Activated CD8-positive, alpha-beta memory T cell treated with anti-CD3 and anti-CD28 coated beads, Interleukin-2, amount 10 ng/mL, durations not matched to agents 7 days and 5 days (primary cell): ENCODE measurements at regions of chr1 and their contacts with region 1.

Region 1: GRCh38 chr1:151847842-151848596 is 5.5 kb downstream of the THEM5 start:
- DNase-seq: peak; percentile 31
- ATAC-seq: no peak
- H3K4me3 Mint-ChIP-seq: no peak overlapping the region
- H3K27ac Mint-ChIP-seq: peak overlapping the region; percentile 57
- H3K4me1 Mint-ChIP-seq: peaks cover 39% of the 10 kb centered on the region
- H3K27me3 Mint-ChIP-seq: no peaks in the 10 kb centered on the region

Region 2: GRCh38 chr1:151710187-151710840 is 137.7 kb before region 1 on chr1:
- CTCF ChIA-PET with region 1: no interaction called
- DNase-seq: peak; percentile 46
- ATAC-seq: peak; percentile 8
- H3K4me3 Mint-ChIP-seq: no peak overlapping the region
- H3K27ac Mint-ChIP-seq: no peak overlapping the region
- H3K4me1 Mint-ChIP-seq: no peaks in the 10 kb centered on the region
- H3K27me3 Mint-ChIP-seq: peaks cover 10% of the 10 kb centered on the region

Region 3: GRCh38 chr1:151811147-151811546 is 36.9 kb before region 1 on chr1:
- CTCF ChIA-PET with region 1: no interaction called
- DNase-seq: no peak
- ATAC-seq: no peak
- H3K4me3 Mint-ChIP-seq: no peak overlapping the region
- H3K27ac Mint-ChIP-seq: no peak overlapping the region
- H3K4me1 Mint-ChIP-seq: peaks cover 24% of the 10 kb centered on the region
- H3K27me3 Mint-ChIP-seq: peaks cover 6% of the 10 kb centered on the region

Region 4: DNA sequence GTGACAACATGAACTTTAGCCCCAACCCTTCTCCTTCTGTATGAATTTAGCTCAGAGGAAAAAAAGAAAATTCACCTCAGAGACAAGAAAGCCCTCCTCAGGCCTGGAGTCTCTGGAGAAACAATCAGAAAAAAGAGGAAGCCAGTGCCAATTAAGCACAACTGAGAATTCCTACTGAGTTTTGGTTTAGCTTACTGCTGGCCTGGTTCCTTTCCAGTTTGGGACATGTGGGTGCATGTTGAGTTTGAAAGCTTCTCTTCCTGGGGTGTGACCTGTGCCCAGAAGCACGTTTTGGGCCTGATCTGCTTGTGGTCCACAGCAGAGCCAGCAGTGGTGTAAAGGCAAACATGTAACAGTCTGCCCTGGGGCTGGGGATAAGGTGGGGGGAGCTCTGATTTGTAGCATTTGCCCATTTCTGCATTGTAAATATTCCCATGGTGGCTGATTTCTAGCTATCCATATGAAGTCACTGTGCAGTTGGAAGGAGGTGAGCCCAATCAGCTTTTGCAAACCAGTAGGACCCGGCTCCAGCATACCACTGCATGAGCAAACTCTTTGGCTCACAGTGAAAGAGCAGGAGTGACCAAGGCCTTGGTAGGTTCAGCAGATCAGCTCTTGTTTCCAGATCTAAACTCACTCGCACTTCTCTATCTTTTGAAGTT is 10.1 kb after region 1 on chr1:
- CTCF ChIA-PET with region 1: interaction called, 11 read pairs
- DNase-seq: no peak
- ATAC-seq: no peak
- H3K4me3 Mint-ChIP-seq: no peak overlapping the region
- H3K27ac Mint-ChIP-seq: no peak overlapping the region
- H3K4me1 Mint-ChIP-seq: no peaks in the 10 kb centered on the region
- H3K27me3 Mint-ChIP-seq: no peaks in the 10 kb centered on the region

Region 5: GRCh38 chr1:151902858-151903257 is 54.8 kb after region 1 on chr1:
- CTCF ChIA-PET with region 1: no interaction called
- DNase-seq: no peak
- ATAC-seq: no peak
- H3K4me3 Mint-ChIP-seq: no peak overlapping the region
- H3K27ac Mint-ChIP-seq: no peak overlapping the region
- H3K4me1 Mint-ChIP-seq: peaks cover 58% of the 10 kb centered on the region
- H3K27me3 Mint-ChIP-seq: no peaks in the 10 kb centered on the region